ENCODE measurements at regions of chr12 and their contacts with region 1.

Region 1: GRCh38 chr12:119412811-119413794 is 78.6 kb downstream of the CCDC60 start:
- DNase-seq: peak; percentile 65 to 70
- H3K4me3 ChIP-seq: no peak overlapping the region
- H3K27ac ChIP-seq: no peak overlapping the region
- H3K4me1 ChIP-seq: no peaks in the 10 kb centered on the region
- H3K27me3 ChIP-seq: no peaks in the 10 kb centered on the region
- CTCF ChIP-seq: peak; percentile 60 to 90 (median 80)
- POLR2A ChIP-seq: no peak

Region 2: DNA sequence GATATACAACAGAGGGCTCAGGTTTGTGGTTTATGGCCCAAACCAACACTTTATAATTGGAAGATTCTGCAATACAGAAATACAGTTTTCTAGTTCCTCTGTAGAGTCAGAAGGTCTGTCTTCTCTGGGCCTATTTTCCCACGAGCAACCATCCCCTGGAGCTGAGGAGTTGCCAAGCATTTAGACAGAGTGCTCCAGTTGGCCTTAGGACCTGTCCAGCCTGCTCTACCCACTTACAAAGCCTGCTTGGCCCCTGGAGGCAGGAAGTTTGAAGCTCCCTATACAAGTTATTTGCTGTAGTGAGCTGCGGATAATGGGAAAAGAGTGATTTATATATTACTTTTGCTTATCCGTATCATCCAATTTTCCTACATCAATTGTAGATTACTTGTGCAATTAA is 295.2 kb before region 1 on chr12:
- intact Hi-C with region 1: loop called (anchors 2 kb)
- DNase-seq: no peak
- H3K4me3 ChIP-seq: no peak overlapping the region
- H3K27ac ChIP-seq: no peak overlapping the region
- H3K4me1 ChIP-seq: no peaks in the 10 kb centered on the region
- H3K27me3 ChIP-seq: no peaks in the 10 kb centered on the region
- CTCF ChIP-seq: no peak
- POLR2A ChIP-seq: no peak

Measured in thyroid gland (tissue), 4 donors.